ENCODE measurements at regions of chr5 and their contacts with region 1.

Region 1: GRCh38 chr5:148353634-148354033 is 18.3 kb downstream of the SPINK9 start:
- DNase-seq: no peak
- ATAC-seq: no peak
- H3K4me3 ChIP-seq: no peak overlapping the region
- H3K4me3 Mint-ChIP-seq: no peak overlapping the region
- H3K27ac ChIP-seq: no peak overlapping the region
- H3K27ac Mint-ChIP-seq: no peak overlapping the region
- H3K4me1 ChIP-seq: no peaks in the 10 kb centered on the region
- H3K4me1 Mint-ChIP-seq: no peaks in the 10 kb centered on the region
- H3K27me3 ChIP-seq: no peaks in the 10 kb centered on the region
- H3K27me3 Mint-ChIP-seq: peaks cover 0 to 3% (median 0%) of the 10 kb centered on the region in 5 donors

Region 2: GRCh38 chr5:148314204-148314603 is 39.4 kb before region 1 on chr5:
- CTCF ChIA-PET with region 1: no interaction called
- POLR2A ChIA-PET with region 1: no interaction called
- intact Hi-C with region 1: loop called in 1 of 2 experiments (anchors 1 kb)
- DNase-seq: peak in 1 of 9 donors; percentile 8
- ATAC-seq: no peak
- H3K4me3 ChIP-seq: no peak overlapping the region
- H3K4me3 Mint-ChIP-seq: no peak overlapping the region
- H3K27ac ChIP-seq: no peak overlapping the region
- H3K27ac Mint-ChIP-seq: no peak overlapping the region
- H3K4me1 ChIP-seq: no peaks in the 10 kb centered on the region
- H3K4me1 Mint-ChIP-seq: no peaks in the 10 kb centered on the region
- H3K27me3 ChIP-seq: no peaks in the 10 kb centered on the region
- H3K27me3 Mint-ChIP-seq: peaks cover 0 to 7% (median 0%) of the 10 kb centered on the region in 5 donors